Endothelial cell of umbilical vein (primary cell): ENCODE measurements at regions of chr20 and their contacts with region 1.

Region 1: GRCh38 chr20:32652739-32653526 is 20.8 kb downstream of the C20orf203 start:
- DNase-seq: peak; percentile 70
- H3K4me3 ChIP-seq: no peak overlapping the region
- H3K27ac ChIP-seq: no peak overlapping the region
- H3K4me1 ChIP-seq: no peaks in the 10 kb centered on the region
- H3K27me3 ChIP-seq: no peaks in the 10 kb centered on the region
- CTCF ChIP-seq: peak; percentile 93 to 95
- POLR2A ChIP-seq: no peak

Region 2: GRCh38 chr20:31856516-31856915 is 796.4 kb before region 1 on chr20:
- CTCF ChIA-PET with region 1: interaction called, 8 read pairs
- POLR2A ChIA-PET with region 1: no interaction called
- dilution Hi-C with region 1: no loop called
- intact Hi-C with region 1: loop called (anchors 2 kb)
- DNase-seq: no peak
- H3K4me3 ChIP-seq: no peak overlapping the region
- H3K27ac ChIP-seq: no peak overlapping the region
- H3K4me1 ChIP-seq: no peaks in the 10 kb centered on the region
- H3K27me3 ChIP-seq: peaks cover 27 to 40% of the 10 kb centered on the region in 2 experiments
- CTCF ChIP-seq: no peak
- POLR2A ChIP-seq: no peak

Region 3: GRCh38 chr20:32207626-32208498 is 445.1 kb before region 1 on chr20 and contains the starts of genes PLAGL2 and POFUT1:
- CTCF ChIA-PET with region 1: no interaction called
- POLR2A ChIA-PET with region 1: no interaction called
- dilution Hi-C with region 1: no loop called
- intact Hi-C with region 1: loop called (anchors 5 kb)
- DNase-seq: peak; percentile 79
- H3K4me3 ChIP-seq: peak within 1 kb of the TSS; percentile 38 to 81 (median 76)
- H3K27ac ChIP-seq: peak within 1 kb of the TSS; percentile 45
- H3K4me1 ChIP-seq: peaks cover 21% of the 10 kb centered on the region
- H3K27me3 ChIP-seq: no peaks in the 10 kb centered on the region
- CTCF ChIP-seq: peak; percentile 13 to 34
- POLR2A ChIP-seq: peak; percentile 95
- total RNA-seq, gene PLAGL2: 14.6 and 15.2 TPM in 2 replicates
- total RNA-seq, gene POFUT1: 48.1 and 51.4 TPM in 2 replicates

Region 4: DNA sequence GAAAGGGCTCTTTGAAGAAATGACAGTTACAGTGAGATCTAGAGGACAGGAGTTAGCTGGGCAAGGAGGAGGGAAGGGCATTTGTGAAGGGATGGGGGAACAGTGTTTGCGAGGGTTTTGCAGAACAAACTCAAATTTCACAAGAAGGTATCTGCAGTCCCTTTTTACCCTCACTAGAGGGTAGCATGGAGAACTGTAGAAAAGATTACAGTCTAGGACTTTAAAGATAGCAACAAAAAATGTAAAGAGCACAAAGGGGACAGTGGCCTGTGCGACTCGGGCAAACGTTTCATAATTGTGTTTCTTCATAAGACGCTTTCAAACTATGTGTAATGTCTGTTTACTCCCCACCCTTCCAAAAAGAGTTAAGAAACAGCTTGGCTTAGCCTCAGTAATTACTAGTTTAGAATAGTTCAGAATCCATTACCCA is 316.0 kb before region 1 on chr20:
- CTCF ChIA-PET with region 1: no interaction called
- POLR2A ChIA-PET with region 1: no interaction called
- dilution Hi-C with region 1: no loop called
- intact Hi-C with region 1: loop called (anchors 2 kb)
- DNase-seq: peak; percentile 44
- H3K4me3 ChIP-seq: no peak overlapping the region
- H3K27ac ChIP-seq: no peak overlapping the region
- H3K4me1 ChIP-seq: peaks cover 29% of the 10 kb centered on the region
- H3K27me3 ChIP-seq: no peaks in the 10 kb centered on the region
- CTCF ChIP-seq: peak; percentile 51 to 53
- POLR2A ChIP-seq: no peak

Region 5: DNA sequence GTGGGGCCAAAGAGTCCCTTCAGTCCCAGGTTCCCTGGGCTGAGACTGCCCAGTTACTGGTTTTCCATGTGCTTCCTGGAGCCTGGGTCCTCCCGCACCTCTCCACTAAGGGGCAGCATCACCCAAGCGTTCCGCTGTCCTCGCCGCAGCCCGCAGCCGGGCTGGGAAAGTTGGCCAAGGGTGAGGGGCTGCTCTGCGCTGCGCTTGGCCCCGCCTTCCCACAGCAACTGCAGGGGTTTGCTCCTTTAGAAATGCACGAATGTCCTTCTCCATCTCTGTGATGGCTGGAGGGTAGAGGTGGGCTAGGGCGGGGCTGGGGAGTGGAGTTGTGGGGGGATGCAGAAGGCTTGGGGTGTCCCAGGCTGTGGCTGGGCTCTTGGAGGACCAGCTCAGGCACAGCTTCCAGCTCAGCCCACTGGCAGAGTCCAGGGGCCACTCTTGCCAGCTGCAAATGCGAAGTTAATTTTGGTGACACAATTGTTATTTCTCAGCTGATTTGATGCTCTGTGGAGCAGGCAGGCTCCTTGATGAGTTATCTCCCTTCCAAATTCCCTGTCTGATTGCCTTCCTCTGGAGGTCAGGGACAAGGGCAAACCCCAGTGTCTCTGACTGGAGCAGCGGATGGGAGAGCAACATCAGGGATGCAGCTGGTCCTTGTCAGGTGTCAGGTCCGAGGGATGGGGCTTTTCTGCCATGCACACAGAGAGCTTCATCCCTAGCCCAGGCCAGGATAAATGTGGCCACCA is 131.0 kb before region 1 on chr20:
- CTCF ChIA-PET with region 1: interaction called, 246 read pairs
- POLR2A ChIA-PET with region 1: no interaction called
- dilution Hi-C with region 1: no loop called
- intact Hi-C with region 1: loop called (anchors 1 kb)
- DNase-seq: peak; percentile 53
- H3K4me3 ChIP-seq: no peak overlapping the region
- H3K27ac ChIP-seq: no peak overlapping the region
- H3K4me1 ChIP-seq: peaks cover 16% of the 10 kb centered on the region
- H3K27me3 ChIP-seq: no peaks in the 10 kb centered on the region
- CTCF ChIP-seq: peak; percentile 86 to 90
- POLR2A ChIP-seq: no peak

Region 6: DNA sequence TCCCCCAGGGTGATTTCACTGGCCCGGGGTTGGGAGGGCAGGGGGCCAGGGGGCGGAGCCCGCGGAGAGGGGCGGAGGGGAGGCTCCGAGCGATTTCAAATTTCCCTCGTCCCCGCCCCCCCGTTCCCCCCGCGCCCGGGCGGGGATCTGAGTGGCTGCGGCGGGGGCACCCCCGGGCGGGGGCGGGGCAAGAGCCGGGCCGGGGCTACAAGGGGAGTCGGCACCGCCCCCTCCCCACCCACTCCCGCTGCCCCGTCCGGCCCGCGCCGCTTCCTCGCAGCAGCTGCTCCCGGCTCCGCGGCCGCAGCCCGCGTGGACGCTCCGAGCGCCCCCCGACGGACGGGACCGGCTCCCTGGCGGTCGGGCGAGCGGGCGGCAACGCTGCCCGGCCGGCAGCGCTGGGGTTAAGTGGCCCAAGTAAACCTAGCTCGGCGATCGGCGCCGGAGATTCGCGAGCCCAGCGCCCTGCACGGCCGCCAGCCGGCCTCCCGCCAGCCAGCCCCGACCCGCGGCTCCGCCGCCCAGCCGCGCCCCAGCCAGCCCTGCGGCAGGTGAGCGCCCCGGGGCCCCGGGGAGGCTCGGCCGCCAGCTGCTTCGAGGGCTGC is 109.3 kb after region 1 on chr20 and contains the start of gene DNMT3B:
- CTCF ChIA-PET with region 1: no interaction called
- POLR2A ChIA-PET with region 1: no interaction called
- dilution Hi-C with region 1: no loop called
- intact Hi-C with region 1: no loop called
- DNase-seq: peak; percentile 79
- H3K4me3 ChIP-seq: peak within 1 kb of the TSS; percentile 73 to 92 (median 88)
- H3K27ac ChIP-seq: no peak within 1 kb of the TSS
- H3K4me1 ChIP-seq: peaks cover 14% of the 10 kb centered on the region
- H3K27me3 ChIP-seq: no peaks in the 10 kb centered on the region
- CTCF ChIP-seq: peak; percentile 14 to 23
- POLR2A ChIP-seq: no peak
- total RNA-seq, gene DNMT3B: 6.8 TPM in 2 replicates

Region 7: GRCh38 chr20:33169176-33169794 is 516.4 kb after region 1 on chr20:
- CTCF ChIA-PET with region 1: no interaction called
- POLR2A ChIA-PET with region 1: no interaction called
- dilution Hi-C with region 1: no loop called
- intact Hi-C with region 1: no loop called
- DNase-seq: no peak
- H3K4me3 ChIP-seq: no peak overlapping the region
- H3K27ac ChIP-seq: no peak overlapping the region
- H3K4me1 ChIP-seq: no peaks in the 10 kb centered on the region
- H3K27me3 ChIP-seq: no peaks in the 10 kb centered on the region
- CTCF ChIP-seq: peak; percentile 31 to 46
- POLR2A ChIP-seq: no peak